Activated CD4-positive, alpha-beta T cell treated with anti-CD3 and anti-CD28 coated beads for 36 hours (primary cell): ENCODE measurements at regions of chr7 and their contacts with region 1.

Region 1: DNA sequence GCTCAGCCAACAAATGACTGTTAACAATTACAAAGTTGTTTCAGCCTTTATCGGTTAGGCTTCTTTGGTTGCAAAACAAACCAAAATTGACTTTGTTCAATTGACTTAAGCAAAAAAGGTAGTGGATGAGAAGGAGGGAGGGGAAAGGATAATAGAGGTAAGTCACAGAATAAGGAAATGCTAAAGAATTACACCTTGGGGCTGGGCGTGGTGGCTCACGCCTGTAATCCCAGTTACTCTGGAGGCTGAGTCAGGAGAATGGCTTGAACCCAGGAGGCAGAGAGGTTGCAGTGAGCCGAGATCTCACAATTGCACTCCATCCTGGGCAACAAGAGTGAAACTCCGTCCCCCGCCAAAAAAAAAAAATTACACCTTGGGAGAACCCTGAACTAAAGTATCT is 41.4 kb downstream of the AHCYL2 start:
- DNase-seq: no peak
- ATAC-seq: no peak
- H3K4me3 Mint-ChIP-seq: no peak overlapping the region
- H3K27ac Mint-ChIP-seq: no peak overlapping the region
- H3K4me1 Mint-ChIP-seq: peaks cover 16% of the 10 kb centered on the region
- H3K27me3 Mint-ChIP-seq: no peaks in the 10 kb centered on the region

Region 2: GRCh38 chr7:128672912-128673517 is 593.2 kb before region 1 on chr7:
- CTCF ChIA-PET with region 1: no interaction called
- POLR2A ChIA-PET with region 1: no interaction called
- intact Hi-C with region 1: no loop called
- DNase-seq: peak; percentile 50
- ATAC-seq: peak; percentile 68
- H3K4me3 Mint-ChIP-seq: no peak overlapping the region
- H3K27ac Mint-ChIP-seq: no peak overlapping the region
- H3K4me1 Mint-ChIP-seq: no peaks in the 10 kb centered on the region
- H3K27me3 Mint-ChIP-seq: peaks cover 17% of the 10 kb centered on the region

Region 3: DNA sequence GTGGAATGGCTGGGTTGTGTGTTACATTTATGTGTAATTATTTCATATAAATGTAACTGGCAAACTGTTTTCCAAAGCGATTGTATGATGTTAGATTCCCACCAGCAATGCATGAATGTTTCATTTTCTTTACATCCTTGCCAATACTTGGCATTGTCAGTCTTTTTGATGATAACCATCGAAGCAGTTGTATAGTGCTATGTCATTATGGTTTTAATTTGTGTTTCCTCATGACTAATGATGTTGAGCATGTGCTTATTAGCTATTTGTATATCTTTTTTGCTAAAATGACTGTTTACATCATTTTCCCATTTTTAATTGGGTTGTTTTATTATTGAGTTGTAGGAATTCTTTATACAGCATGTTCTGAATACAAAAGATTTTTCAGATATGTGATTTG is 19.1 kb before region 1 on chr7:
- CTCF ChIA-PET with region 1: interaction called, 5 read pairs
- POLR2A ChIA-PET with region 1: no interaction called
- intact Hi-C with region 1: loop called in 1 of 2 experiments (anchors 2 kb)
- DNase-seq: no peak
- ATAC-seq: no peak
- H3K4me3 Mint-ChIP-seq: no peak overlapping the region
- H3K27ac Mint-ChIP-seq: no peak overlapping the region
- H3K4me1 Mint-ChIP-seq: peaks cover 2% of the 10 kb centered on the region
- H3K27me3 Mint-ChIP-seq: no peaks in the 10 kb centered on the region